Kidney (tissue), 22 donors: ENCODE measurements at regions of chr2 and their contacts with region 1.

Region 1: DNA sequence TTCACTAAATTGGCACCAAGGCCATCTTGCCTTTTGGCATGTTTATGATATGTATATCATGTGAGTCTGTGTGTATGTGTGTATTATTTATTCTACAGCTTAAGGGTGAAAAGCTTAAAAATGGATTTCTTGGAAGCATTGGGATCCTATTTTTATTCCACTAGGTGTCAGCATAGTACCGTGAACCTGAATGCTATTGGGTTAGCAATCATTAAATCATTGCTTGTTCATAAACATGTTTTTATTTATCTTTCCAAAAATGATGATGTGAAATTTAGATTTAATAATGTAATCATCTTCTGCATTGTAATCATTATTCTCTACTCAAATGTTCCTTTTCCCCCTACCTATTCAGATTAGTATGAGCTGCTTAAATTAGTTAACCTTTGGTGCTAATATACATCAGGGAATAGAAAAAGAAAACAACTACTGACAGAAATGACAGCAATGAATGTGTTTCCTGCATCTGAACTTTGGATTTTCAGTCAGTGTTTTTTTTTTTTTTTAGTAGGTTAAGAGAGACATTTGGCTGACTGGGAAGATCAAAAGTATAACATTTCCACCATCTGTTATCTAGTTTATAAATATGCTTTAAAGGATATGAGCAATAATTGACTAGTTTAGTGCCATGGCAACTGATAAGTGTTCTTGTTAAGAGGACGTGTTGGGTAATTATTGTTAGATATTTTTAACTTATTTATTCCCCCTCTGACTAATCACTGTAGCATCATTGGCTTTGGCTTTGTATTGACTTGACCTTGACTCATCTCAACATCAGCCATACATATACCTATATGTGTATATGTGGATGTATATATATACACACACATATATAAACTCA is 14.1 kb upstream of the ZSWIM2 start:
- DNase-seq: peak in 2 of 5 donors; percentile 43 to 45
- H3K4me3 ChIP-seq: no peak overlapping the region
- H3K27ac ChIP-seq: no peak overlapping the region
- H3K4me1 ChIP-seq: no peaks in the 10 kb centered on the region
- H3K27me3 ChIP-seq: no peaks in the 10 kb centered on the region
- CTCF ChIP-seq: peak; percentile 44

Region 2: DNA sequence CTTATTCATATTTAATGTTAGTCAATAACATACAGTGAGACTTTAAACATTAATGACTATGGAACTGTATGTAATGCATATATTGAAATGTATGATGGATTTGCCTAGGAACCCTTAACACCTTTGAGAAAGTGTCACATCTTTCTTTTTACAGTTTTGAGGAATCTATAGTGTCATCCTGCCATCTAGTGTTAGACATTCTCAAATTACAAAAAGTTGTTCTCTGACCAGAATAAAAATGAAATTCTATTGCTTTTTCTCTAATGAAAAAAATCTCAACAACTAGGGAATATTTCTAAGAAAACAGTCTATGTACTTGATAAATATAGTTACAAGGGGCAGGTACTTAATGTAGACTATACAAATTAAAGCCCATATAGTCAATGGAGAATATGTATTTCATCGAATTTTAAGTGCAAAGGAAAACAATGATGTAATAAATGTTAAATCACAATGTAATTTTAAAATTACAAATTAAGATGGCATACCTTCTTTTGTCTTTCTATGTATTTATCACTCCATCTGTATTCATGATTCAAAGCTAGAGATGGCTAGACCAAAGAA is 590.1 kb after region 1 on chr2:
- intact Hi-C with region 1: loop called (anchors 5 kb)
- DNase-seq: peak in 2 of 5 donors; percentile 39 to 56
- H3K4me3 ChIP-seq: no peak overlapping the region
- H3K27ac ChIP-seq: no peak overlapping the region
- H3K4me1 ChIP-seq: no peaks in the 10 kb centered on the region
- H3K27me3 ChIP-seq: no peaks in the 10 kb centered on the region
- CTCF ChIP-seq: peak; percentile 31